ENCODE measurements at regions of chr12 and their contacts with region 1.

Region 1: DNA sequence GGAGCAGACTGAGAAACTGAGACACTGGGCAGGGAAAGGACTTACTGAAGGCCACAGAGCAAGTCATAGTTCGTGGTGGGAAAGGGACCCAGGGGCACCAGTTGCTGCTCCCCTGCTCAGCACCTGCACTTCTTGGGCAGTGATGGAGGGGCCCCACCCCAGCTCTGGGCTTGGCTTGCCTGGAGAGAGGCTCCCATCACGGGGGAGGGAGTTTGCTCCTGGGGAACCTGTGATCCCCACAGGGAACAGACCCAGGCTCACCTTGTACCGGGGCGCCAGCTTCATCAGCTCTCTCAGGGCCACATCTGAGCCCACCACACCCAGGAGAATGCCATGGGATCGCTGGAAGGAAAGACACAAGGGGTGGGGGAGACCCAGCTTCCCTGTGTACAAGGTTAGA is 39.8 kb downstream of the CACNA2D4 start:
- DNase-seq: peak; percentile 54

Region 2: GRCh38 chr12:1820191-1820895 is 58.4 kb before region 1 on chr12 and contains the start of gene LRTM2:
- intact Hi-C with region 1: no loop called
- DNase-seq: no peak
- total RNA-seq, gene LRTM2: not detected

Region 3: DNA sequence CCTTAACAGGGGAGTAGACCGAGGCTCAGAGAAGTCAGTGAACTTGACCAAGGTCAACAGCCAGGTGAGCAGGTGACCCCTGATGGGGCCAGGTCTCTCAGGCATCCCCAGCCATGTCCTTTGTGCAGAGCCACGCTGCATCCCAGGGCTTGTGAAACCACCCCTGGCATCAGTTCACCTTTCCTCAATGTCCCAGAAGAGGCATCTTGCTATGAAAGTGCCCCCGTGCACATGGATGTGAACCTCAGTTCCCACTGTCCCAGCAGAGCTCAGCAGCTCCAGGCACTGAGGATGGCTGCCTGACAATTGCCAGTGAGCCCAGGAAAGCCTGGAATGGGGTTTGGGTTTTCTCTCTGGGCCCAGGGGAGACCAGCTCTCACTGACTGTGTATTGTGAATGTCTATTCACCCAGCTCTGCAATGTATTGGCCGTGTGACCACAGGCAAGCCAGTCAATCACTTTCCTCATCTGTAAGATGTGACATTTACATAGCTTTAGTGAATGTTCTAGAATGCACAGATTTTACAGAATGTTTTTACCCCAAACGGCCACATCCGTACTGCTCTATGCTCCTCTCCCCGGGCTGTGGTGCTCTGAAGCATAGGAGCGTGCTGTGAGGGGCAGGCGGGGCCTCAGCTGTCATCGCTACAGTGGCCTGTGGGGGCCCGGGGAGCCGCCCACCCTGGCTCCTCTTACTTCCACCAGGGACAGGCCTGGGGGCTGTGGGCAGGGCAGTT is 34.9 kb after region 1 on chr12:
- intact Hi-C with region 1: loop called in 1 of 2 experiments (anchors 1 kb)
- DNase-seq: no peak